ENCODE measurements at regions of chr18 and their contacts with region 1.

Region 1: GRCh38 chr18:9136315-9137155 is at the start of gene ANKRD12:
- DNase-seq: peak; percentile 83 to 95
- ATAC-seq: peak; percentile 85 to 88
- H3K4me3 ChIP-seq: peak within 1 kb of the TSS; percentile 62
- H3K27ac ChIP-seq: peak within 1 kb of the TSS; percentile 84 to 89
- H3K4me1 ChIP-seq: peaks cover 56% of the 10 kb centered on the region
- CTCF ChIP-seq: no peak
- EP300 ChIP-seq: no peak
- POLR2A ChIP-seq: peak; percentile 31
- RAD21 ChIP-seq: no peak
- polyA plus RNA-seq, gene ANKRD12: 7.3 and 8.0 TPM in 2 replicates

Region 2: DNA sequence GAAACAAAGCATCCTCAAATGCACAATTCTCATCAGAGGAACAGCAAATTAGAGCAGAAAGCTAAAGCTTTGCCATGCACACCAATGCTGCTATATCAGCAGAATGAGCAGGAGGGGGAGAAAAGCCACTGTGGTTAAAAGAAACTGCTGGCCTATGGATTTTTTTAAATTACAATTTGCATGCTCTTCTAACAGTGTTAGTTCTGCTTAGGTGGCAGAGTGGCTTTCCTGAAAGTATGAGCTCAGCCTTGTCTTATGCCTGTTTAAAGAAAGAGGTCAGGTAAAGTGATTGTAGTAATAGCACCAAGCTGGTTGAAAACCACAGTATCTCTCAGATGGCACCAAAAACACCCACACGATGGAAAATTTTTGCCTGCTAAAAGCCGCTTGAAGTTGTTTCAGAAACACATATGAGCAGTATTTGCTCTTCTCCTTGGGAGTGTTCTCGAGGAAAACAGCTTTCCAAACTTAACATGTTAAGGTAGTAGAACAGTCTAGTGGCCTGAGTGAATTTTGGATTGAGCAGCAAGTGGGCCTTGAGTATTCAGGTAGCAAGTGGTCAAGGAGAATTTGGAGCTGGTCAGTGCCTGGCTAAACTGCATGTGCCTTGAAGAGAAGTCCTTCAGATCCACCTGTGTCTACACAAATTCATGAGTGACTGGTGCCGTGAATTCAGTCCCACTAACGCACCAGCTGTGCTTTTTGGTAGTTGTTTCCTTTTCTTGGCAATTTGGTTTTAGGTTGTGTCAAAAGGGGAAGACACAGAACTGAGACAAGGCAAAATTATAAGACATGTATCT is 53.6 kb before region 1 on chr18:
- CTCF ChIA-PET with region 1: no interaction called
- POLR2A ChIA-PET with region 1: no interaction called
- DNase-seq: no peak
- ATAC-seq: no peak
- H3K4me3 ChIP-seq: no peak overlapping the region
- H3K27ac ChIP-seq: 0 out of 6 replicates have a peak overlapping the region, but pooled peaks of 1 of the 2 experiments have one; percentile 31
- H3K4me1 ChIP-seq: 0 out of 3 replicates have a peak, but pooled peaks cover 9% of the 10 kb centered on the region
- CTCF ChIP-seq: no peak
- EP300 ChIP-seq: no peak
- POLR2A ChIP-seq: no peak
- RAD21 ChIP-seq: no peak

Region 3: DNA sequence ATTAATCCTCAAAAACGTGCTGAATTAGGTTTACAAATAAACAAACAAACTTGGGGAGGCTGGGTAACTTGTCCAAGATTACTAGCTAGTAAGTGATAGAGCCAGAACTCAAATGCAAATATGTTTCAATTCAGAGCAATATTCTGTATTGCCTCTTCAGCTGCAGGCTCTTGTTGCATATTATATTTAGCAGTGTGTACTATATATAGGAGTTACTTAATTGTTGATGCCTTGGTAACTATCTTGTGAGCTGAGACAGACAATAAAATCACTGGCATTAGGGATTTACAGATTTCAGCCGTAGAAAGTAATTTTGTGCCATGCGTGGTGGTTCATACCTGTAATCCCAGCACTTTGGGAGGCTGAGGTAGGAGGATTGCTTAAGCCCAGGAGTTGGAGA is 10.2 kb before region 1 on chr18:
- CTCF ChIA-PET with region 1: no interaction called
- POLR2A ChIA-PET with region 1: no interaction called
- DNase-seq: no peak
- ATAC-seq: no peak
- H3K4me3 ChIP-seq: no peak overlapping the region
- H3K27ac ChIP-seq: no peak overlapping the region
- H3K4me1 ChIP-seq: peaks cover 6% of the 10 kb centered on the region
- CTCF ChIP-seq: no peak
- EP300 ChIP-seq: no peak
- POLR2A ChIP-seq: no peak
- RAD21 ChIP-seq: no peak

Region 4: DNA sequence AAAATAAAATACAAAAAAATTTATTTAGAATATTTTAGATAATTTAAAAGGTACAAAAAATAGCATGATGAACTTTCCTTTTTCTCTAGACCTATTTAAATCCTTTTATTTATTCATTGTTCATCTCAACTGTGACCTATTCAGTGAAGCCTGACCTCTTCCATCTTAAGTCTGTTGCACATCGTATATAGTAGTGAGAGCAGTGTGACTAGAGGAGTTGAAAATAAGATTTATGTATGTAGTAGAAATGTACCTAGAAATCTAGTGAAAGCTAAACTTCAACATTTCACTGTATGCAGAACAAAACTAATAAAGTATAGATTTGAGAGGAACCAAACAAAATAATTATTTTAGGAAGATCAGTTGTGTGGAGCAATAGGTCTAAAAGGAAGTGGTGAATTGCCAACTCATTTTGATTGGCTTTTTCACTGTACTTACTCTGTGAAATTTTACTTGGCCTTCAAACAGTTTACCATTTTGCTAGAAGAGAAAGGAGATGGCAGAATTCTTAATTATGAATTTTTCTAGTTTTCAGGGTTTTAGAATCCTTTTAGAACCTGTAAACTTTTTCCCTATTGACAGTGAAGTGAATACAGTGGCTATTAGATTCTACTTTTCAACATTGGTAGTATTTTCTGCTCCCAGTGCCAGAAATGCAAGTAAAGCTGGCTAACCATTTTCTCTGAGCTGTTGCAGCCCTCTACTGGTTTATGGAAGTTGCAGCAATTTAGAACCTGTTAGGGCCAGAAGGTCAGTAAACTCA is 11.1 kb after region 1 on chr18:
- CTCF ChIA-PET with region 1: interaction called, 10 read pairs
- POLR2A ChIA-PET with region 1: interaction called, 6 read pairs
- DNase-seq: peak; percentile 41 to 75
- ATAC-seq: peak; percentile 84 to 86
- H3K4me3 ChIP-seq: no peak overlapping the region
- H3K27ac ChIP-seq: peak overlapping the region; percentile 12 to 33; a peak in 2 of 6 replicates
- H3K4me1 ChIP-seq: peaks cover 46% of the 10 kb centered on the region
- CTCF ChIP-seq: peak; percentile 71
- EP300 ChIP-seq: no peak
- POLR2A ChIP-seq: no peak
- RAD21 ChIP-seq: peak; percentile 83 to 84